HEK293T (cell line): ENCODE measurements at regions of chr7 and their contacts with region 1.

Region 1: DNA sequence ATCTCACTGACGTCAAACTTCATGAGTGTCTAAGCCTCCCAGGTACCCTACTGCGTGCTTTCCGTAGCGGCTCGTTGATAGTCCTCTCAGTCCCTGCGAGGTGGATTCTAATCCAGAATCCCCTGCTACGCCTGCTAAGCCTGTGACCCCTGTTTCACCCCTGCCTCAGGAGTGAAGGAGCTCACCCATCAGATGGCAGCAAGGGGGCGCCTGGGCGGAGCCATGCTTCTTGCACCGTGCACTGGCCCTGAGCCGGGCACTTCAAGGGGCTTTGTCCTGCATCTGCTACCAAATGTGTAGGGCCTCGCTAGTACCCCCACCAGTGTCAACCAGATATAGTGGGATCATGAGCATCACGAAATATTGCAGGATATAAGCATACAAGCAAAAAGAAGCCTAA is 918 bp upstream of the STRA8 start:
- DNase-seq: peak; percentile 79

Region 2: DNA sequence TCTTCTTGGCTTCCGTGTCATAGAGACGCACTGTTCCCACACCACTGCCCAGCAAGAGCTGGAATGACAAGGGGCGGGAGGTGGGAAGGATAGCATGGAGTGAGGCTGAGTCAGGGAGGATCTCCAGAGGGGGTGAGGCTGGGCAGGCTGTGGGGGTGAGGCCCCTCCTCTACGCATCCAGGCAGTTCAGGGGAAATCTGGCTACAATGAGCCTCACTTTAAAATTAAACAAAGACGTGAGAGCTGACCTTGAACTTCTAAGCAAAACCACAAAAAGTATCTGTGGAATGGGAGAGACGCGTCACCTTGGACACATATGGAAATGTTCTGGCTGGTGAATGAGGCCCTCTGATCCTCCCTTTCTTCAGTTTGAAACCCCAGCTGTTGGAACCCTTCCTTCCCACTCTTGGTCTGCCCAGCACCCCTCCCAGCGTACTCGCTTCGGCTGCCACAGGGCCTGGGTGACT is 39.1 kb before region 1 on chr7:
- CTCF ChIA-PET with region 1: no interaction called
- POLR2A ChIA-PET with region 1: no interaction called
- DNase-seq: no peak

Region 3: GRCh38 chr7:135217645-135218509 is 14.8 kb before region 1 on chr7:
- CTCF ChIA-PET with region 1: interaction called, 10 read pairs
- POLR2A ChIA-PET with region 1: interaction called, 3 read pairs
- DNase-seq: no peak

Region 4: DNA sequence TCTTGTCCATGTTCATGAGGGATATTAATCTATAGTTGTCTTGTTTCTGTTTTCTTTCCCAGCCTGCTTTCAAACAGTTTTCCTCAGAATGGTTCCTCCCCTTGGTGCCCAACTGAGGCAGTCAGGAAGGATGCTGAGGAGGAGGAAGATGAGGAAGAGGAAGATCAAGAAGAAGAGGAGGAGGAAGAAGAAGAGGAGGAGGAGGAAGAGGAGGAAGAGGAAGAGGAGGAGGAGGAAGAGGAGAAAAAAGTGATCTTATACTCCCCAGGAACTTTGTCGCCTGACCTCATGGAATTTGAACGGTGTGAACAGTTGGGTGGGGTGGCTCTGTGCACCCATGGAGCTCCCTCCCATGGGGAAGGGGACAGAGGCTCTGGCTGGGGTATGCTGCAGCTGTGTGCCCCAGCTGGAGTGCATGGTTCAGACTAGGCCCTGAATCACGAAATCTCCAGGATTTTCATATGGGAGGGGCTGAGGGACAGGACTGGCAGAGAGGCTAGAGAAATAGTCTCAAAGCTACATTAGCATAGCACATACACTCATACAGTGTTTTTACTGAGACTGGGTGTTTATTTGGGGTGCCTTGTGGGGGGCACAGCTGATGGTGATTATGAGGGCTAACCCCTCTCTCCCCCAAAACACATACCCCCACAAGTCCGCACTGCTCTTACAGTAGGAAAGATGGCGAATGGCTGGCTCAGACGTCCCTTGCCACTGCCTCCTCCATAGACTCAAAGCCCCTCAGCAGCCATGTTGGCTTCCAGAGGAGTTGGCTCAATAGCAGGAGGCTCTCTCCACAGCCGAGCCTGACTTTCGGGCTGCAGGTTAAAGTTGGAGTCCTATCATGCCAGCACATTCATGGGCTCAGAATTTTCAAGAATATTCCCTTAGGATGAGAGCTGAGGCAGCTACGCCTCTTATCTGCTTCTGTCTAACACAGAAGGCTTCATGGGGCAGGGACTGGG is 12.8 kb after region 1 on chr7:
- CTCF ChIA-PET with region 1: interaction called, 10 read pairs
- POLR2A ChIA-PET with region 1: no interaction called
- DNase-seq: no peak